GM18951 (cell line): ENCODE measurements at regions of chr15 and their contacts with region 1.

Region 1: GRCh38 chr15:58227706-58228543 is 89.7 kb downstream of the AQP9 start:
- POLR2A ChIP-seq: no peak

Region 2: GRCh38 chr15:58793862-58794261 is 565.9 kb after region 1 on chr15:
- in situ Hi-C with region 1: no loop called
- POLR2A ChIP-seq: no peak

Region 3: DNA sequence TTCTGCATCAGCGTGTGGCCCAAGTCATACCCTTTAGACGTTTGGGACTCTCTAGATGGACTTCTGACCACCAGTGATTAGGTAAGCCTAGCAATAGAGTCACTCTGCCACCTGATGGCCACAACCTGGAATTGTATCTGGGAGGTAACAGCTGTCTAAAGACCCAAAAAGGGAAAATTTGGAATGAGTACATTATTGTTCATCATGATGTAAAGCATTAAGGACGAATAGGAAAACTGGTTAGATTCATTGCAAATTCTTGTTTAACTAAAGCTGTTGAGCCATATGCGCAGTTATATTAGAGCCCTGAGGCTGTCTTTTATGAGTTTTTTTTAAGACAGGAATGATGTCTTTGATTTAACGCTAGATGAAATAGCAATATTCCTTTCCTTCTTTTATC is 1273.7 kb after region 1 on chr15:
- in situ Hi-C with region 1: loop called (anchors 25 kb)
- POLR2A ChIP-seq: no peak